HEK293 (cell line): ENCODE measurements at regions of chr1 and their contacts with region 1.

Region 1: GRCh38 chr1:153990468-153991150 is at the start of gene RPS27:
- H3K4me3 ChIP-seq: peak within 1 kb of the TSS; percentile 93
- H3K27ac ChIP-seq: peak within 1 kb of the TSS; percentile 67
- H3K4me1 ChIP-seq: peaks cover 3% of the 10 kb centered on the region; the same call in 1 of the 2 replicates
- CTCF ChIP-seq: no peak

Region 2: GRCh38 chr1:153510984-153511410 is 479.6 kb before region 1 on chr1:
- CTCF ChIA-PET with region 1: interaction called, 15 read pairs
- POLR2A ChIA-PET with region 1: interaction called, 4 read pairs
- H3K4me3 ChIP-seq: no peak overlapping the region
- H3K27ac ChIP-seq: no peak overlapping the region
- H3K4me1 ChIP-seq: no peaks in the 10 kb centered on the region
- CTCF ChIP-seq: peak; percentile 86

Region 3: DNA sequence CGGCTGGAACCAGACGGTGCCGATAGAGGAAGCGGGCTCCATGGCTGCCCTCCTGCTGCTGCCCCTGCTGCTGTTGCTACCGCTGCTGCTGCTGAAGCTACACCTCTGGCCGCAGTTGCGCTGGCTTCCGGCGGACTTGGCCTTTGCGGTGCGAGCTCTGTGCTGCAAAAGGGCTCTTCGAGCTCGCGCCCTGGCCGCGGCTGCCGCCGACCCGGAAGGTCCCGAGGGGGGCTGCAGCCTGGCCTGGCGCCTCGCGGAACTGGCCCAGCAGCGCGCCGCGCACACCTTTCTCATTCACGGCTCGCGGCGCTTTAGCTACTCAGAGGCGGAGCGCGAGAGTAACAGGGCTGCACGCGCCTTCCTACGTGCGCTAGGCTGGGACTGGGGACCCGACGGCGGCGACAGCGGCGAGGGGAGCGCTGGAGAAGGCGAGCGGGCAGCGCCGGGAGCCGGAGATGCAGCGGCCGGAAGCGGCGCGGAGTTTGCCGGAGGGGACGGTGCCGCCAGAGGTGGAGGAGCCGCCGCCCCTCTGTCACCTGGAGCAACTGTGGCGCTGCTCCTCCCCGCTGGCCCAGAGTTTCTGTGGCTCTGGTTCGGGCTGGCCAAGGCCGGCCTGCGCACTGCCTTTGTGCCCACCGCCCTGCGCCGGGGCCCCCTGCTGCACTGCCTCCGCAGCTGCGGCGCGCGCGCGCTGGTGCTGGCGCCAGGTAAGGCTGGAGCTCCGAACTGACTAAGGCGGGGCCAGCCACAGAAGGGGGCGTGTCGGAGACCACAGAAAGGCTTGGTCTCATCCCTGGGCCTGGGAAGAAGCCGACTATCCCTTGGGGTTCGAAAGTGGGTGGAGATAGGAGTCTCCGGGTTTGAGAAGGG is 214.9 kb before region 1 on chr1:
- CTCF ChIA-PET with region 1: interaction called, 12 read pairs
- POLR2A ChIA-PET with region 1: interaction called, 8 read pairs
- H3K4me3 ChIP-seq: peak overlapping the region; percentile 60
- H3K27ac ChIP-seq: peak overlapping the region; percentile 74; the same call in 1 of the 2 replicates
- H3K4me1 ChIP-seq: peaks cover 8% of the 10 kb centered on the region
- CTCF ChIP-seq: peak; percentile 66

Region 4: DNA sequence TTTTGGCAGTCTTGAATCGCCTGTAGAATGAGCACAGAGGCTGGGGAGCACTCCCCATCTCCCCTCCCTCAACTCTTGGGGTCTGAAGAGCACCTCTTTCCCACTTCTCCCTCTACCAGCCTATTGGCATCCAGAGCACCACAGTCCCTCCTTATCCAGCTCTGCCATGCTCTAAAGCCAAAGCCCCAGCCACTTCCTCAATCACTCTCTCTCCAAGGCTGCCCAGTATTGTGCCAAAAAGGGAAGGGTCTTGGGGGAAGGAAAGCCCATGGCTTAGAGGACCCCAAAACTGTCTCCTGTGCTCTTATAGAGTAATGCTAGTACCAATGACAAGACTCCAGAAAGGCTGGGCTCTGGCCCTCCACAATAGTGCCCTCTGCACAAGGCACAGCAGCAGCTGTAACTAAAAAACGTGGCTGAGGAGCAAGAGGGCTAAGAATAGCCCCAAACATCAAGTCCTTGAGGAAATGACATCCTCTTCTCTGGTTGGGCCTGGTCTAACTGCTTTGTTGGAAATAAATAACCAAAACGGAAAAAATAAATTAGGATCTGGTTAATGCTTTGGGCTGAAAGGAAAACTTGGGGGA is 187.0 kb before region 1 on chr1:
- CTCF ChIA-PET with region 1: interaction called, 46 read pairs
- POLR2A ChIA-PET with region 1: interaction called, 8 read pairs
- H3K4me3 ChIP-seq: no peak overlapping the region
- H3K27ac ChIP-seq: no peak overlapping the region
- H3K4me1 ChIP-seq: no peaks in the 10 kb centered on the region
- CTCF ChIP-seq: no peak

Region 5: GRCh38 chr1:153922972-153923925 is 67.4 kb before region 1 on chr1 and contains the start of gene GATAD2B:
- CTCF ChIA-PET with region 1: interaction called, 5 read pairs
- POLR2A ChIA-PET with region 1: interaction called, 24 read pairs
- H3K4me3 ChIP-seq: peak within 1 kb of the TSS; percentile 95
- H3K27ac ChIP-seq: peak within 1 kb of the TSS; percentile 78
- H3K4me1 ChIP-seq: peaks cover 4% of the 10 kb centered on the region
- CTCF ChIP-seq: no peak

Region 6: DNA sequence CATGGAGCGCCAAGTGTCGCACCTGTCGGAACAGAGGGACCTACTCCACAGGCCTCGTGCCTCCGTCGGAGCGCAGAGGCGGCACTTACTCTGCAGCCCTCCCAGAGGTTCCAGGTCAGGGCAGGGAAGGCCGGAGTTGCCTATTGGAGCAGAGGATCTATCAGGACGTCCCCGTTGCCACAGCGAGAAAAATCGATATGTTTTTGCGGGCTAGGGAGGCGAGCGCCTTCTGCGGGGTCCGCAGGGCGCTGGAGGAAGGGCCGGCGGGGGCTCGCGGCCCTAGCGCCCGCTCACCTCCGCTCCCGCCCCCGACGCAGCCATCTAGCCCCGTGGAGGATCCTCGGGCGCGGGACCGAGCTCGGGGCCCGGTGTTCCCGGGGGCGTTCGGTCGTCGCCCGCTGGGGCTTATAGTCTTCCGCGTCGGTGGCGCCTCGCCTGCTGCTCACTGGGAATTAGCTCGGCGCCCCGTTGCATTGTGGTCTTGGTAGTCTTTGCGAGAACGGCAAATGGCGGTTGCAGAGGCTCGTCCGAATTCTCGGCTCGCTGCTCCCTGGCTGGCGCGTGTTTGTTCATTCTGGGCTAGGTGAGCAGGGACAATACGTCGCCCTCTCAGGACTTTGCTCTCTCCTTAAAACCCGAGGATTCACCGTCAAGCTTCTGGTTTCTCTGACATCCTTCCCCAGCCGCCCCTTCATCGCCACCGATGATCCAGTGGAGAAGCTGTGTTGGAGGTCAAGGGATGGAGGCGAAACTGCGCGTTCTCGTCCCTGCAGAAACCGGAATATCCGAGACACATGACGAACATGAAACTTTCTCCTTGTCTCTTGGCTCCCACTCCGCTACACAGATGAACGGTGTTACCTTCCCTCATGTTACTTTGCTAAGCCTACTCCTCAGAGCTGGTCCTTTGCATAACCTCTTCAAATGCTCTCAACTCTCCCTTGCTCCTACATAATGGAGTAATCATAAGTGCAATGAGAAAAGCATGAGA is 13.1 kb before region 1 on chr1 and contains the start of gene JTB:
- CTCF ChIA-PET with region 1: interaction called, 29 read pairs
- POLR2A ChIA-PET with region 1: interaction called, 114 read pairs
- H3K4me3 ChIP-seq: peak within 1 kb of the TSS; percentile 90
- H3K27ac ChIP-seq: peak within 1 kb of the TSS; percentile 88
- H3K4me1 ChIP-seq: no peaks in the 10 kb centered on the region
- CTCF ChIP-seq: peak; percentile 6; the same call in 1 of the 2 replicates